Activated B cell treated with CpG ODN at 0.5 μM for 24 hours (primary cell): ENCODE measurements at regions of chr2 and their contacts with region 1.

Region 1: GRCh38 chr2:130797493-130798435 is 39.0 kb upstream of the ARHGEF4 start:
- DNase-seq: peak; percentile 91
- ATAC-seq: peak; percentile 93
- H3K4me3 Mint-ChIP-seq: peak overlapping the region; percentile 77
- H3K27ac Mint-ChIP-seq: no peak overlapping the region
- H3K4me1 Mint-ChIP-seq: peaks cover 7% of the 10 kb centered on the region
- H3K27me3 Mint-ChIP-seq: peaks cover 3% of the 10 kb centered on the region
- CTCF ChIP-seq: no peak

Region 2: DNA sequence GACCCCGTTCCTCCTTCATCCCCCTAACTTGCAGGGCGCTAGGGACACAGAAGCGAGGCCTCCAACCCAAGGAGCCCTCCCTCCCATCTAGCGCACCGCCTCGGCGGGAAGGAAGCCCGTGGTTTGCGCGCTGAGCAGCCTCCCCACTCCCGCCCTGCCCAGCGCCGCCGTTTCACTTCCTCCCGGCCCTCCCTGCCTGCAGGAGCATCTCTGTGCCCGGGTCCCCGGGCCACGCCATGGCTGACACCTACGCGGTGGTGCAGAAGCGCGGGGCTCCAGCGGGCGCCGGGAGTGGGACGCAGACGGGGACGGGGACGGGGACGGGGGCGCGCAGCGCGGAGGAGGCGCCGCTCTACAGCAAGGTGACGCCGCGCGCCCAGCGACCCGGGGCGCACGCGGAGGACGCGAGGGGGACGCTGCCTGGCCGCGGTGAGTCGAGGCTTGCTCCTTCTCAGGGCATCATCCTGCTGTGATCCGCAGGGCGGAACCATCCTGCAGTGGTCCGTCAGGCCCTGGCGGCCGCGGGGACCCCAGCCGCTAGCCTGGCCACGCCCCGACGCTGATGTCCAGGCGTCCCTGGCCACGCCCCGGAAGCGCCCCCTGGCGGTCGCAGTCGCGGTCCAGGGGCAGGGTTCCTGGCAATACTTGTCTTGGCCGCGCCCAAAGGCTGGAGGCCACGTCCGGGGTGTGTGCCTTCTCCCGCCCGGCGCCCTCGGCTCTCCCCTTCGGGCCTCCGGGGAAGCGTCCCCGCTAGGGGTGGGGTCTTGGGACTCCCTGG is 425.5 kb before region 1 on chr2:
- CTCF ChIA-PET with region 1: no interaction called
- POLR2A ChIA-PET with region 1: no interaction called
- intact Hi-C with region 1: loop called (anchors 5 kb)
- DNase-seq: peak; percentile 82
- ATAC-seq: peak; percentile 85
- H3K4me3 Mint-ChIP-seq: peak overlapping the region; percentile 89
- H3K27ac Mint-ChIP-seq: peak overlapping the region; percentile 95
- H3K4me1 Mint-ChIP-seq: peaks cover 64% of the 10 kb centered on the region
- H3K27me3 Mint-ChIP-seq: no peaks in the 10 kb centered on the region
- CTCF ChIP-seq: peak; percentile 80

Region 3: GRCh38 chr2:130836501-130837174 is 38.9 kb after region 1 on chr2 and contains the start of gene ARHGEF4:
- CTCF ChIA-PET with region 1: no interaction called
- POLR2A ChIA-PET with region 1: interaction called, 4 read pairs
- intact Hi-C with region 1: loop called (anchors 5 kb)
- DNase-seq: no peak
- ATAC-seq: peak; percentile 81
- H3K4me3 Mint-ChIP-seq: peak within 1 kb of the TSS; percentile 35
- H3K27ac Mint-ChIP-seq: no peak within 1 kb of the TSS
- H3K4me1 Mint-ChIP-seq: peaks cover 10% of the 10 kb centered on the region
- H3K27me3 Mint-ChIP-seq: peaks cover 24% of the 10 kb centered on the region
- CTCF ChIP-seq: no peak
- total RNA-seq, gene ARHGEF4: 0.29 and 0.39 TPM in 2 replicates

Region 4: GRCh38 chr2:130963849-130964793 is 166.4 kb after region 1 on chr2:
- CTCF ChIA-PET with region 1: no interaction called
- POLR2A ChIA-PET with region 1: no interaction called
- intact Hi-C with region 1: loop called (anchors 1 kb)
- DNase-seq: no peak
- ATAC-seq: no peak
- H3K4me3 Mint-ChIP-seq: no peak overlapping the region
- H3K27ac Mint-ChIP-seq: no peak overlapping the region
- H3K4me1 Mint-ChIP-seq: peaks cover 4% of the 10 kb centered on the region
- H3K27me3 Mint-ChIP-seq: peaks cover 54% of the 10 kb centered on the region
- CTCF ChIP-seq: no peak

Region 5: DNA sequence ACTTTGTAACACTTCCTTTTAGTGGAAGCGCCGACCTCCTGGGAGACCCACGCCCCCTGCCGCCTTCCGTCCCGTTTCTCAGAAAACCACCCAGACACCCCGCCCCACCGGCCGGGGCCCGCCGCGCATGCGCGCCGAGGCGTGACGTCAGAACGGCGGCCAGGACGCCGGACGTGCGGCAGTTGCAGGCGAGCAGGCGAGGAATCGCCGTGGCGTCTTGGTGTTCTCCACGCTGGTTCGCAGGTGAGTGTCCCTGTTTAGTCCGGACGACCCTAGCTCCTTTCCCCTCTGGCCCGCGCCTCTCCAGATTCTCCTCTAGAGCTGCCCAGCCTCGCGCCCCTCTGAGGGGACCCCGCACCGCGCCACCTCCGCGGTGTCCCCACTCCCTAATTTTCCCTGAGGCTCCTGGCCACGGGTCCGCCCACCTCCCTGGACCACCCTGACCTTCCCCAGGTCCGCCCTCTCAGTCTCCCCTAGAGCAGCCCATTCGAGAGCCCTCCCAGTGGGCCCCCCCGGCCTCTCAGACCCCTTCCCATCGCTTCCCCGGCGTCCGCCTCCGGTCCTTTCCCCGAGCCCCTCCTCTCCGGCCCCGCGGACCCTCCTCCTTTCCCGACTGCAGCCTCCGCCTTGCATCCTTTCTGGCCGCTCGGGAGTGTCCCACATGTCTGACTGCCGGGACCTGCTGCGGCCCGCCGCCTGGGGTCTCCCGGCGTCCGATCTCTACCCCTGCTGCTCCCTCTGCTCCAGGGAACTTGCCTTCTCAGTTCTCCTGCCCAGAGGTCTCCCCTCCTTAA is 307.6 kb after region 1 on chr2 and contains the start of gene PLEKHB2:
- CTCF ChIA-PET with region 1: no interaction called
- POLR2A ChIA-PET with region 1: no interaction called
- intact Hi-C with region 1: loop called (anchors 2 kb)
- DNase-seq: peak; percentile 97
- ATAC-seq: peak; percentile 84
- H3K4me3 Mint-ChIP-seq: peak within 1 kb of the TSS; percentile 96
- H3K27ac Mint-ChIP-seq: peak within 1 kb of the TSS; percentile 91
- H3K4me1 Mint-ChIP-seq: peaks cover 34% of the 10 kb centered on the region
- H3K27me3 Mint-ChIP-seq: no peaks in the 10 kb centered on the region
- CTCF ChIP-seq: no peak
- total RNA-seq, gene PLEKHB2: 32.3 and 33.6 TPM in 2 replicates